Activated CD8-positive, alpha-beta T cell treated with anti-CD3 and anti-CD28 coated beads, Interleukin-2, amount 10 ng/mL, durations not matched to agents 7 days and 5 days (primary cell): ENCODE measurements at regions of chr9 and their contacts with region 1.

Region 1: GRCh38 chr9:85610074-85610860 is 131.5 kb downstream of the AGTPBP1 start:
- DNase-seq: peak; percentile 70
- ATAC-seq: peak; percentile 84
- H3K4me3 Mint-ChIP-seq: peak overlapping the region; percentile 49
- H3K27ac Mint-ChIP-seq: peak overlapping the region; percentile 41
- H3K4me1 Mint-ChIP-seq: peaks cover 8% of the 10 kb centered on the region
- H3K27me3 Mint-ChIP-seq: no peaks in the 10 kb centered on the region

Region 2: DNA sequence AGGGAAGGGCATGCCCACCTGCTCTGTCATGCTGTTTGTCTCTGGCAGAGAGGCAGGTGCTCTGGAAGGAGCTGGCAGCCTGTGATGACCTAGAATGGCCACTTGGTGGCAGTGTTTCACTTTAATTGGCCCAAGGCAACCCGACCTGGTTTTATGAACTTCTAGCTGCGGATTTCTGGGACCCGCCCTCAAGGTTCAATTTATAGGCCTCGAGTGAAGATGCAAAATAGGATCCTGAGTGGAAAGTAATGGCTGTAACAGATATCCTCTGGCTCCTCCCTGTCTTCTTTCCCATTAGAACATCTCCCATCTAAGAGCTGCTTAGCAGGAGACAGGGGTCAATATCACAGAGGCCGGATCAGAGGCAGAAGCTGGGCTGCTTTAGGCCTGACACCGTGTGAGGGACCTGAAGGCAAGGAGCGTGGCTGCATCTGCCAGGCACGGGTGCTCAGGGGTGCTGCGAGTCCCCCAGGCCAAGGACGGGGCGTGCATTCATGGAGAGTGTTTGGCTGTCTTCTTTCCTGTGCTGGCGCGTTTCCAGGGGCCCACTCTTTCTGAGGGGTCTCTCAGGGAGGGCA is 1213.0 kb before region 1 on chr9:
- CTCF ChIA-PET with region 1: interaction called, 18 read pairs
- POLR2A ChIA-PET with region 1: no interaction called
- DNase-seq: peak; percentile 73
- ATAC-seq: peak; percentile 82
- H3K4me3 Mint-ChIP-seq: no peak overlapping the region
- H3K27ac Mint-ChIP-seq: no peak overlapping the region
- H3K4me1 Mint-ChIP-seq: no peaks in the 10 kb centered on the region
- H3K27me3 Mint-ChIP-seq: no peaks in the 10 kb centered on the region

Region 3: DNA sequence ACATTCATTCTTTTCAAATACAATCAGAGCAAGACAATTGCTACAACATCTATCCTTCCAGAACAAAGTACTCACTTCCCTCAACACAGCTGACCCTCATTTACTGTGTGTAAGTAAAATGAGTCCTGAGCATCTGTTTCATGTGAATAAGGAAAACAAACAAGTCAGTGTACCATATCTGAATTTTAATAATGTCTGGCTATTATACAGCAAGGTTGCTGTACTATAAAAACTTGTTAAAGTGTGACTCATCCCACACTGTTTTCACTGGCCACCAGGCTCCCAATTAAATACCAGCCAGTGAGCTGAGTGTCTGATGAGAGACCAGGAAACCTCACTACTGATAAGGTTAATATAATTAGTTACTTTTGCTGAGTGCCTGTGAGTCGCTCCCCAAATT is 208.3 kb before region 1 on chr9:
- CTCF ChIA-PET with region 1: no interaction called
- POLR2A ChIA-PET with region 1: no interaction called
- DNase-seq: no peak
- ATAC-seq: no peak
- H3K4me3 Mint-ChIP-seq: no peak overlapping the region
- H3K27ac Mint-ChIP-seq: no peak overlapping the region
- H3K4me1 Mint-ChIP-seq: no peaks in the 10 kb centered on the region
- H3K27me3 Mint-ChIP-seq: peaks cover 4% of the 10 kb centered on the region

Region 4: GRCh38 chr9:85425153-85425611 is 185.1 kb before region 1 on chr9:
- CTCF ChIA-PET with region 1: interaction called, 10 read pairs
- POLR2A ChIA-PET with region 1: no interaction called
- DNase-seq: peak; percentile 69
- ATAC-seq: peak; percentile 60
- H3K4me3 Mint-ChIP-seq: no peak overlapping the region
- H3K27ac Mint-ChIP-seq: no peak overlapping the region
- H3K4me1 Mint-ChIP-seq: peaks cover 14% of the 10 kb centered on the region
- H3K27me3 Mint-ChIP-seq: peaks cover 4% of the 10 kb centered on the region

Region 5: GRCh38 chr9:85658716-85659115 is 48.4 kb after region 1 on chr9:
- CTCF ChIA-PET with region 1: no interaction called
- POLR2A ChIA-PET with region 1: no interaction called
- DNase-seq: no peak
- ATAC-seq: no peak
- H3K4me3 Mint-ChIP-seq: no peak overlapping the region
- H3K27ac Mint-ChIP-seq: no peak overlapping the region
- H3K4me1 Mint-ChIP-seq: no peaks in the 10 kb centered on the region
- H3K27me3 Mint-ChIP-seq: no peaks in the 10 kb centered on the region